Cardiac septum (tissue), 1 donor: ENCODE measurements at regions of chr3 and their contacts with region 1.

Region 1: DNA sequence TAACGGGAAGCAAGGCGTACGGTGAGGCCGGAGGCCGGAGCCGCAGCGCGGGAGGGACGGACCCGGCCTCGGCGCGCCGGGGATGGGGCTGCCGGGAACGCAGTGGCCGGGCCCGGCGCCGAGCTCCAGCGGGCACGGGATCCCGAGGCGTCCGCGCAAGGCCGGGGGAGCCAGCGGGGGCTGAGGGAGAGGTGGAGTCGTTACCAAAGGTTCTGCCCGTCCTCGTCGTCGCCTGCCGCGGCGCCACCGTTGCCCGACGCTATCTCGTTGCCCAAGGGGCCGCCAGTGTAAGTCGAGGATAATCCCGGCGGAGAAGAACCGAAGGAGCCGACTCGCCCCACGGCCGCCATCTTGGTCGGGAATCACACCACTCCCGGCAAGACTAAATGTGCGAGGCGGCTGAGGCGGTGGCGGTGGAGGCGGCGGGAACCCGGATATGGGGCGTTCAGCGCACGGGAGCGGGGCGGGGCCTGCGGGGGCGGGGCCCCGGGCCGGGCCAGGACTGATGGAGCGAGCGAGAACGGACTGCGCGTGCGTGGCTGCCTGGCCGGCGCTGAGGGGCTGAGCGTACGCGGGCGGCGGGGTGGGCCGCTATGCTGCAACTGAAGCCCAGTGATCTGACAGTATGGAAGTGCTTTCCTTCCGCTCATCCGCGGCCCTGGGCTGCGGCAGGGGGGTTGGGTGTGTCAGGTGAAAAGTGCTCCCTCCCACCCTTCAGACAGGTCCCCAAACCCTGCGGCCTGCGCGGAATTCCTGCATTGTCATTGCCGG is at the start of gene DYNC1LI1:
- DNase-seq: peak; percentile 99
- total RNA-seq, gene DYNC1LI1: 56.8 TPM

Region 2: GRCh38 chr3:32502118-32502945 is 68.3 kb before region 1 on chr3 and contains the start of gene CMTM6:
- intact Hi-C with region 1: loop called (anchors 2 kb)
- DNase-seq: peak; percentile 93
- total RNA-seq, gene CMTM6: 15.4 TPM